PC-3 (cell line): ENCODE measurements at regions of chr3 and their contacts with region 1.

Region 1: GRCh38 chr3:9214599-9214998 is 34.8 kb downstream of the SRGAP3 start:
- DNase-seq: peak; percentile 82
- ATAC-seq: peak; percentile 90
- H3K4me3 ChIP-seq: peak overlapping the region; percentile 55
- H3K27ac ChIP-seq: peak overlapping the region; percentile 95
- H3K4me1 ChIP-seq: peaks cover 41% of the 10 kb centered on the region
- H3K27me3 ChIP-seq: no peaks in the 10 kb centered on the region
- CTCF ChIP-seq: no peak

Region 2: GRCh38 chr3:8835385-8835784 is 379.2 kb before region 1 on chr3:
- CTCF ChIA-PET with region 1: interaction called, 15 read pairs
- POLR2A ChIA-PET with region 1: no interaction called
- intact Hi-C with region 1: no loop called
- DNase-seq: no peak
- ATAC-seq: no peak
- H3K4me3 ChIP-seq: no peak overlapping the region
- H3K27ac ChIP-seq: no peak overlapping the region
- H3K4me1 ChIP-seq: peaks cover 11% of the 10 kb centered on the region; the same call in 1 of the 2 replicates
- H3K27me3 ChIP-seq: no peaks in the 10 kb centered on the region
- CTCF ChIP-seq: no peak

Region 3: DNA sequence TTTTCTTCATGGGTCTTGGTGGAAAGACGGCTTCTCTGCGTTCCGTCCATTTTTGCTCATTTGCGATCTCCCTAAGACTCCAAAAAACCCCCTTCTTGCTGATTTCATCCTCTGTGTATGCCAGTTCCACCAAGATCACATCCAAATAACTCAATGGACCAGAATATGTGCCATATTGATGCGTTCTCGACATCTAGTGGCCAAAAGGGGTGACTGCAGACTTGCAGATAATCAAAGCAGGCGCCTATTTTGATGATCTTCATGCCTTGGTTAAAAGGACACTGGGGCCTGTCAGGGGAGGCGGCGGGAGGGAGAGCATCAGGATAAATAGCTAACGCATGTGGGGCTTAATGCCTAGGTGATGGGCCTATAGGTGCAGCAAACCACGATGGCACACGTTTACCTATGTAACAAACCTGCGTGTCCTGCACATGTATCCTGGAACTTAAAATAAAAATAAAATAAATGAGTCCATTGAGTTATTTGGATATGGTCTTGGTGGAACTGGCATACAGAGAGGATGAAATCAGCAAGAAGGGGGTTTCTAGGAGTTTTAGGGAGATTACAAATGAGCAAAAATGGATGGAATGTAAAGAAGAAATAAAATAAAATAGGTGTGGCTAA is 147.1 kb before region 1 on chr3:
- CTCF ChIA-PET with region 1: no interaction called
- POLR2A ChIA-PET with region 1: no interaction called
- intact Hi-C with region 1: no loop called
- DNase-seq: peak; percentile 78
- ATAC-seq: peak; percentile 94
- H3K4me3 ChIP-seq: no peak overlapping the region
- H3K27ac ChIP-seq: no peak overlapping the region
- H3K4me1 ChIP-seq: no peaks in the 10 kb centered on the region
- H3K27me3 ChIP-seq: no peaks in the 10 kb centered on the region
- CTCF ChIP-seq: peak; percentile 97

Region 4: GRCh38 chr3:9122732-9123364 is 91.8 kb before region 1 on chr3:
- CTCF ChIA-PET with region 1: interaction called, 16 read pairs
- POLR2A ChIA-PET with region 1: no interaction called
- intact Hi-C with region 1: no loop called
- DNase-seq: peak; percentile 44
- ATAC-seq: peak; percentile 76
- H3K4me3 ChIP-seq: no peak overlapping the region
- H3K27ac ChIP-seq: no peak overlapping the region
- H3K4me1 ChIP-seq: peaks cover 5% of the 10 kb centered on the region; the same call in 1 of the 2 replicates
- H3K27me3 ChIP-seq: no peaks in the 10 kb centered on the region
- CTCF ChIP-seq: no peak

Region 5: DNA sequence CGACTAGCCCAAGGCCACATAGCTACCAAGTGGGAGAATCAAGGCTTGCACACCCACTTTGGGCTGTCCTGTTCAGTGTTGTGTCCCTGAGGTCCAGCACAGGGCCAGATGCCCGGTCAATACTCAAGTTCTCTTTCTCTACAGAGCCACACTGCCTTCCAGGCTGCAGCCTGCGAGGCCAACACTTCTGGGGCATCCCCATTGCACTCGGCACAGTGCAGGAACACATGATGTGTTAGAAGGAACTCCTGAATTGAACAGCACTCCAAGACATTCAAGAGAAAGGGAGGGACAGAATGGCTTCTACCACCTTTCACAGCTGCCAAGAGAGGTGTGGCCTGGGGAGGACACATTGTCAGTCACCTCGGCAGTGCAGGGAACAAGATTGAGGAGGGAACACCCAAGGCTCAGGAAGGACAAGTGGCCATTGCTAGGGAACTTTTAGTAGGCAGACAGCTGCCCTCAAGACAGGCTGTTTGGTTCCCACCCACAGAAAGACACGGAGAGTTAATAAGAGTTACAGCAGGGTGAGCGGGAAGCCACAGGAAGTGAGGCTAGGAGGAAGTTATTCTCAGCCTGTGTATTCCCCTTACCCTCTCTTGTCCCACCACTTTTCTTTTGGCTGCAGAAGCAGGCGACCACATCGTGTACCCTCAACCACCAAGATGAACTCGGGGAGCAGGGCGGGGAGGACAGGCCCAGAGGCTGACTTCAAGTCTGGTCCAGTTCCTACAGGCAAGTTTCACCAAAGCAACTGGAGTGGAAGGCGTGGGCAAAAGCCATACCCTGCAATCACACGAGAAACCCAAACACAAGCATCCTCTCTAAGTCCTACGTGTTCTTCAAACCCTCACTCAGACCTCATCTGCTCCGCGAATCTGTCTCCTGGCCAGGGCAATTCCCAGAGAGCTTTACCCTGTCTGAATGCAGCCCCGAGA is 34.5 kb before region 1 on chr3:
- CTCF ChIA-PET with region 1: no interaction called
- POLR2A ChIA-PET with region 1: no interaction called
- intact Hi-C with region 1: no loop called
- DNase-seq: no peak
- ATAC-seq: no peak
- H3K4me3 ChIP-seq: no peak overlapping the region
- H3K27ac ChIP-seq: no peak overlapping the region
- H3K4me1 ChIP-seq: peaks cover 11% of the 10 kb centered on the region
- H3K27me3 ChIP-seq: no peaks in the 10 kb centered on the region
- CTCF ChIP-seq: no peak